Common myeloid progenitor, CD34-positive (primary cell): ENCODE measurements at regions of chr12 and their contacts with region 1.

Region 1: GRCh38 chr12:51009056-51009440 is 17.1 kb downstream of the SLC11A2 start:
- DNase-seq: peak; percentile 46 to 88 (median 80)
- H3K4me3 ChIP-seq: peak overlapping the region in 6 of 7 experiments; percentile 7 to 58 (median 30)
- H3K27ac ChIP-seq: peak overlapping the region in 1 of 2 experiments; percentile 55
- H3K4me1 ChIP-seq: peaks cover 6 to 29% (median 15%) of the 10 kb centered on the region in 4 experiments
- H3K27me3 ChIP-seq: no peaks in the 10 kb centered on the region

Region 2: DNA sequence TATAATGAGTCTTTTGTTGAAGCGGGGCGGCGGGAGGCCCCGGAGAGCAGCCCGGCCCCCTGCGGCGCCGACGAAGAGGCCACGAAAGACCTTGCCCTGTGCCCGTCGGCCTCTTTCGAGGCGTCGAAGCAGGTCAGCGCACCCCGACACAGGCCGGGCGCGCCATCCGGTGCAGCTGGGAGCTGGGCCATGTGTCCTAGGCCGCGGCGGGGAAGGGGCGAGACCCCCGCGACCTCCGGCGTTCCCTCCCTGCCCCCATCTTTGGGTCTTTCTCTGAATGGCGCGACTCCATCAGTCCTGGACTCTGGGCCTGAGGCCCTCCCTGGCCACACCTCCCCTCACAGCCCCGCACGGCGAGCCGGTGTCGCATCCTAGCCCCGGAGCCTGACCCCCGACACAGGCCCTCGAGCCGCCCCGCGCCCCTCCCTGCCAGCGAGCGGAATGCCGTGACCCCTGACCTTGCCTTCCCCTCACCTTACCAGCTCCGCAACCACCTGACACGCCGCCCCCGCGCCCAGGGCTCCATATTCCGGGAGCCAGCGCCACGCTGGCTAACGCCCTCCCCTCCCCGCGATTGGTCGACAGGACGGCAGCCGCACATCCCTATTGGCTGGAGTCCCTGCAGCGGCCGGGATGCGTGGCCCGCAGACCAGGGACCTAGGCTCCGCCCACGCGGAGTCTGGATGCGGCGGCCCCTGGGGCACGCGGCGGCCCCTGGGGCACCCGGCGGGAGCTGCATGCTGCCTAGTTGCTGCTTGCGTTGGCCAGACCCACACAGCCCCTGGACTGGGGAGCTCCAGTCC is 17.0 kb after region 1 on chr12 and contains the start of gene SLC11A2:
- CTCF ChIA-PET with region 1: interaction called, 17 read pairs
- POLR2A ChIA-PET with region 1: interaction called, 5 read pairs
- DNase-seq: peak; percentile 93 to 95 (median 95)
- H3K4me3 ChIP-seq: peak within 1 kb of the TSS; percentile 4 to 84 (median 74)
- H3K27ac ChIP-seq: peak within 1 kb of the TSS; percentile 52 to 84
- H3K4me1 ChIP-seq: peaks cover 17 to 50% (median 41%) of the 10 kb centered on the region in 4 experiments
- H3K27me3 ChIP-seq: no peaks in the 10 kb centered on the region

Region 3: GRCh38 chr12:51103977-51104376 is 94.9 kb after region 1 on chr12:
- CTCF ChIA-PET with region 1: no interaction called
- POLR2A ChIA-PET with region 1: no interaction called
- DNase-seq: no peak
- H3K4me3 ChIP-seq: no peak overlapping the region
- H3K27ac ChIP-seq: no peak overlapping the region
- H3K4me1 ChIP-seq: peaks cover 0 to 3% (median 0%) of the 10 kb centered on the region in 4 experiments
- H3K27me3 ChIP-seq: no peaks in the 10 kb centered on the region